CD4-positive, alpha-beta memory T cell (primary cell): ENCODE measurements at regions of chr3 and their contacts with region 1.

Region 1: DNA sequence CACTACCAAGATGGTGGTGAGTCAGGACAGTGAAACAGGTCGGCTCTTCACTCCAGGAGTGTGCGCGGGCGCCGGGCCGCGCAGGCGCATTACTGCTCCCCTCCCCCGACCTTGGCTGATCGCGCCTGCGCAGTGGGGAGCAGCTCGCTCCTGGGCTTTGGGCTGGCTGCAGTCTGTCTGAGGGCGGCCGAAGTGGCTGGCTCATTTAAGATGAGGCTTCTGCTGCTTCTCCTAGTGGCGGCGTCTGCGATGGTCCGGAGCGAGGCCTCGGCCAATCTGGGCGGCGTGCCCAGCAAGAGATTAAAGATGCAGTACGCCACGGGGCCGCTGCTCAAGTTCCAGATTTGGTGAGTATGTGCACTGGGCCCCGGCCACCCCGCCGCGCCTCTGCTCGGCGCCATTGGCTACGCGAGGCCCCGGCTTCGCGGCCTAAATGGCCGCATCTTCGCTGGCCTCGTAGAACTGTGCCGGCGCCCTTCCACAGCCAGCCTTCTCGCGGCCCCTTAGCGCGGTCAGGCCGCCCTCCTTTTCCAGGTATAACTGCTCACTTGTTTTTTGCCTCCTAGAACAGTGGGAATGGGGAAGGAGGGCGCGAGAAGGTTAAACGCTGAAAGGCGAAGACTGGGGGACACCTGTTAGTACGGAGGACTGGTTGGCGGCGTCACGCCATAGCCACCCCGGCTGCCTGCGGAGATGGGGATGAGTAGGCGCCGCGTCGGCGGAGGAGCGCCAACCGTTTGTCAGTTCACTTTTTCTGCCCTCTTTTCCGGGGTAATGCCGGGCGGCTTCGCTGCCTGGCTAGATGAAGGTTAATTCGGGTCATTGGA is at the start of gene SELENOT:
- DNase-seq: peak; percentile 92 to 98 (median 96)
- H3K4me3 ChIP-seq: peak within 1 kb of the TSS; percentile 71 to 91
- H3K4me3 Mint-ChIP-seq: peak within 1 kb of the TSS; percentile 92 to 98 (median 96)
- H3K27ac ChIP-seq: peak within 1 kb of the TSS; percentile 97
- H3K27ac Mint-ChIP-seq: peak within 1 kb of the TSS; percentile 97 to 99 (median 98)
- H3K4me1 ChIP-seq: peaks cover 53% of the 10 kb centered on the region
- H3K4me1 Mint-ChIP-seq: peaks cover 37 to 78% (median 61%) of the 10 kb centered on the region in 4 donors
- H3K27me3 ChIP-seq: no peaks in the 10 kb centered on the region
- H3K27me3 Mint-ChIP-seq: no peaks in the 10 kb centered on the region
- total RNA-seq, gene SELENOT: 71.8 to 87.1 TPM

Region 2: GRCh38 chr3:150546226-150547044 is 56.9 kb before region 1 on chr3 and contains the starts of genes EIF2A and SERP1:
- CTCF ChIA-PET with region 1: interaction called, 6 read pairs
- POLR2A ChIA-PET with region 1: interaction called, 76 read pairs
- intact Hi-C with region 1: loop called (anchors 1 kb)
- DNase-seq: peak; percentile 99 to 100 (median 100)
- H3K4me3 ChIP-seq: peak within 1 kb of the TSS; percentile 77 to 89
- H3K4me3 Mint-ChIP-seq: peak within 1 kb of the TSS; percentile 92 to 99 (median 97)
- H3K27ac ChIP-seq: peak within 1 kb of the TSS; percentile 99
- H3K27ac Mint-ChIP-seq: peak within 1 kb of the TSS; percentile 95 to 100 (median 99)
- H3K4me1 ChIP-seq: peaks cover 62% of the 10 kb centered on the region
- H3K4me1 Mint-ChIP-seq: peaks cover 39 to 81% (median 61%) of the 10 kb centered on the region in 4 donors
- H3K27me3 ChIP-seq: no peaks in the 10 kb centered on the region
- H3K27me3 Mint-ChIP-seq: no peaks in the 10 kb centered on the region
- total RNA-seq, gene EIF2A: 90.8 to 95.3 TPM
- total RNA-seq, gene SERP1: 122 to 128 TPM

Region 3: DNA sequence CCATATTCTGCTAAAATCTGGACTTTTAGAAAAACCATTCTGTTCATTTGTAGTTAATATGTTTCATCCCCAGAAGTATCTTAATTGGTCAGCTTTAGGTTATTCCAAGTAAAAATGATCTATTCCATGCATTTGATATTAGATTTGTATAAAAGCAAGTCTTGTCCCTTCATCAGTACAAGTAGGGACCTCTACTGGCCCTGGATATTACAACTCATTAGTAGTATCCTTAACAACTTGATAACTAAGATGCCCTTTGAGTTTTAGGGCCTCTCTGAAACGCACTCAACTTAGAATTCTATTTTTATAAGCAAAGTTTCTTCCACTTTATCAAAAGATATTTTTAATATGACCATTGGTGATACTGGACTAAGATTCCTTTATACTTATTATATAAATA is 25.5 kb before region 1 on chr3:
- CTCF ChIA-PET with region 1: interaction called, 3 read pairs
- POLR2A ChIA-PET with region 1: interaction called, 20 read pairs
- intact Hi-C with region 1: loop called (anchors 5 kb)
- DNase-seq: no peak
- H3K4me3 ChIP-seq: no peak overlapping the region
- H3K4me3 Mint-ChIP-seq: peak overlapping the region in 1 of 8 donors; percentile 25
- H3K27ac ChIP-seq: no peak overlapping the region
- H3K27ac Mint-ChIP-seq: peak overlapping the region in 3 of 7 donors; percentile 30 to 77 (median 42)
- H3K4me1 ChIP-seq: peaks cover 28% of the 10 kb centered on the region
- H3K4me1 Mint-ChIP-seq: peaks cover 22 to 40% (median 35%) of the 10 kb centered on the region in 4 donors
- H3K27me3 ChIP-seq: no peaks in the 10 kb centered on the region
- H3K27me3 Mint-ChIP-seq: no peaks in the 10 kb centered on the region

Region 4: GRCh38 chr3:150588027-150588830 is 15.1 kb before region 1 on chr3:
- CTCF ChIA-PET with region 1: interaction called, 5 read pairs
- POLR2A ChIA-PET with region 1: interaction called, 16 read pairs
- intact Hi-C with region 1: no loop called
- DNase-seq: no peak
- H3K4me3 ChIP-seq: no peak overlapping the region
- H3K4me3 Mint-ChIP-seq: no peak overlapping the region
- H3K27ac ChIP-seq: no peak overlapping the region
- H3K27ac Mint-ChIP-seq: peak overlapping the region in 5 of 7 donors; percentile 5 to 77 (median 32)
- H3K4me1 ChIP-seq: no peaks in the 10 kb centered on the region
- H3K4me1 Mint-ChIP-seq: peaks cover 6 to 15% (median 7%) of the 10 kb centered on the region in 4 donors
- H3K27me3 ChIP-seq: no peaks in the 10 kb centered on the region
- H3K27me3 Mint-ChIP-seq: peaks cover 0 to 1% of the 10 kb centered on the region in 2 donors

Region 5: GRCh38 chr3:150635526-150635925 is 32.2 kb after region 1 on chr3:
- CTCF ChIA-PET with region 1: interaction called, 3 read pairs
- POLR2A ChIA-PET with region 1: interaction called, 12 read pairs
- intact Hi-C with region 1: loop called (anchors 5 kb)
- DNase-seq: peak in 4 of 5 donors; percentile 39 to 51 (median 45)
- H3K4me3 ChIP-seq: no peak overlapping the region
- H3K4me3 Mint-ChIP-seq: peak overlapping the region; percentile 26 to 79 (median 62)
- H3K27ac ChIP-seq: no peak overlapping the region
- H3K27ac Mint-ChIP-seq: peak overlapping the region; percentile 42 to 85 (median 77)
- H3K4me1 ChIP-seq: peaks cover 17% of the 10 kb centered on the region
- H3K4me1 Mint-ChIP-seq: peaks cover 21 to 41% (median 28%) of the 10 kb centered on the region in 4 donors
- H3K27me3 ChIP-seq: no peaks in the 10 kb centered on the region
- H3K27me3 Mint-ChIP-seq: no peaks in the 10 kb centered on the region

Region 6: GRCh38 chr3:150703299-150704134 is 100.2 kb after region 1 on chr3 and contains the start of gene ERICH6:
- CTCF ChIA-PET with region 1: interaction called, 4 read pairs
- POLR2A ChIA-PET with region 1: interaction called, 25 read pairs
- intact Hi-C with region 1: loop called (anchors 1 kb)
- DNase-seq: peak; percentile 75 to 84 (median 82)
- H3K4me3 ChIP-seq: peak within 1 kb of the TSS; percentile 78 to 88
- H3K4me3 Mint-ChIP-seq: peak within 1 kb of the TSS; percentile 92 to 99 (median 96)
- H3K27ac ChIP-seq: peak within 1 kb of the TSS; percentile 82
- H3K27ac Mint-ChIP-seq: peak within 1 kb of the TSS; percentile 94 to 99 (median 98)
- H3K4me1 ChIP-seq: peaks cover 14% of the 10 kb centered on the region
- H3K4me1 Mint-ChIP-seq: peaks cover 11 to 30% (median 19%) of the 10 kb centered on the region in 4 donors
- H3K27me3 ChIP-seq: no peaks in the 10 kb centered on the region
- H3K27me3 Mint-ChIP-seq: no peaks in the 10 kb centered on the region
- total RNA-seq, gene ERICH6: not detected

Region 7: DNA sequence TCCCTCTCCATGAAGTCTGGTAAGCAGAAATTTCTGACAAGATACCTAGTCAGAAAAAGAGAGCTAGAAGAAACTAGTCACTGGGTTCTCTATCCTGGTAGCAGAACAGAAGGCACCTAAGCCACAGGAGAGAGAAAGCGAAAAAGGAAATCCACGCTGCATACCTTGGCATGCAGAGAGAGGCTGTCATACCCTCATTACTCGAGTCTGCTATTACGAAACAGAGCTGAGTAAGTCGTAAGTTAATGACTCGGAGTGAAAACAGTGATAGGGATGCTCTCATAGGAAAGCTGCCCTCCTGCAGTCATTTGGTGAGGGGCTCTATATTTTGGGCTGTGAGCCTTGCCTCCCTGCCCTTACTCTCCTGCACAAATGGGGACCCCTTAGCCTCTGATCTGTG is 353.0 kb after region 1 on chr3:
- CTCF ChIA-PET with region 1: no interaction called
- POLR2A ChIA-PET with region 1: no interaction called
- intact Hi-C with region 1: no loop called
- DNase-seq: no peak
- H3K4me3 ChIP-seq: no peak overlapping the region
- H3K4me3 Mint-ChIP-seq: no peak overlapping the region
- H3K27ac ChIP-seq: no peak overlapping the region
- H3K27ac Mint-ChIP-seq: no peak overlapping the region
- H3K4me1 ChIP-seq: no peaks in the 10 kb centered on the region
- H3K4me1 Mint-ChIP-seq: no peaks in the 10 kb centered on the region
- H3K27me3 ChIP-seq: no peaks in the 10 kb centered on the region
- H3K27me3 Mint-ChIP-seq: peaks cover 14 to 22% of the 10 kb centered on the region in 2 donors